ENCODE measurements at regions of chr6 and their contacts with region 1.

Region 1: DNA sequence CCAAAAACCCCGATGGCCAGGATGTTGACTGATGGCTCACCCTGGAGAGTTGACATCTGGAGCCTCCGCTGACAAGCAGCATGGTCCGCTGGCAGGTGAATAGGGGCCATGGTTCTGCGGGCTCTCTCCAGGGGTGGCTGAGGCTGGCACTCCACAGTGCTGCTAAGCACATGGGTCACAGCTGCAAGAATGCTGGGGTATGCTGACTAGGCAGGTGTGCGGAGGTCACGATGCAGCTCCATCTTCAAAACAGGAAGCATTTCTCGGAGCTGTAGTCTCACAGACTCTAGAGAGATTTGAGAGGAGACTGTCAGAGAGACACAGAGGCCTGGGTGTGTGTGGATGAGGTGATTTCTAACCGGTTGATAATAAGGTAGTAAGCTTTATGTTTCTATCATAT is 341.6 kb downstream of the NRN1 start:
- DNase-seq: peak; percentile 33
- H3K4me3 Mint-ChIP-seq: peak overlapping the region; percentile 17
- H3K27ac Mint-ChIP-seq: peak overlapping the region; percentile 25
- H3K4me1 Mint-ChIP-seq: peaks cover 45% of the 10 kb centered on the region
- H3K27me3 Mint-ChIP-seq: no peaks in the 10 kb centered on the region

Region 2: DNA sequence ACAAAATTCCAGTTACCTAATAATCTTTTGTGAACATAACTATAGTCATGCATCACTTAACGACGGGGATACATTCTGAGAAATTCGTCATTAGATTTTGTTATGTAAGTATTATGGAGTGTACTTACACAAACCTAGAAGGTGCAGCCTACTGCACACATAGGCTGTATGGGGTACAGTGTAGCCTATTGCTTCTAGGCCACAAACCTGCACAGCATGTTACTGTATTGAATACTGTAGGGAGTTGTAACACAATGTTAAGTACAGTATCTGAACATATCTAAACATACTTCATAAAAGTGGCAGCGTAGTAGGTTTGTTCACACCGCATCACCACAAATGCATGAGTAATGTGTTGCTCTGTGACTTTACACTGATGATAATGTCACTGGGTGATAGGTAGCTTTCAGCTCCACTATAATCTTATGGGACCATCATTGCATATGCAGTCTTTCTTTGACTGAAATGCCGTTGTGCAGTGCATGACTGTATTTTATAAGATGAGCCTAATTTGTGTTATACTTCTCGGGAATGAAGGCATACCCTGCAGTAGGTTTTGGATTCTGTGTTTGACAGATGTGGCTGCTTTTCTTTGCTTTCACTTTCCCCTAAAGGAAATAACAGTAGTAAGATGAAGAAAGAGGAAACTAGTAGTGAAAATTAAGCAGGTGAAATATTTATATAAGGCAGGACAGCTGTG is 38.3 kb before region 1 on chr6:
- CTCF ChIA-PET with region 1: no interaction called
- POLR2A ChIA-PET with region 1: no interaction called
- intact Hi-C with region 1: loop called (anchors 5 kb)
- DNase-seq: peak; percentile 37
- H3K4me3 Mint-ChIP-seq: no peak overlapping the region
- H3K27ac Mint-ChIP-seq: no peak overlapping the region
- H3K4me1 Mint-ChIP-seq: peaks cover 20% of the 10 kb centered on the region
- H3K27me3 Mint-ChIP-seq: no peaks in the 10 kb centered on the region

Region 3: GRCh38 chr6:5695260-5696245 is 30.4 kb after region 1 on chr6:
- CTCF ChIA-PET with region 1: no interaction called
- POLR2A ChIA-PET with region 1: no interaction called
- intact Hi-C with region 1: no loop called
- DNase-seq: no peak
- H3K4me3 Mint-ChIP-seq: no peak overlapping the region
- H3K27ac Mint-ChIP-seq: no peak overlapping the region
- H3K4me1 Mint-ChIP-seq: peaks cover 4% of the 10 kb centered on the region
- H3K27me3 Mint-ChIP-seq: no peaks in the 10 kb centered on the region

Region 4: DNA sequence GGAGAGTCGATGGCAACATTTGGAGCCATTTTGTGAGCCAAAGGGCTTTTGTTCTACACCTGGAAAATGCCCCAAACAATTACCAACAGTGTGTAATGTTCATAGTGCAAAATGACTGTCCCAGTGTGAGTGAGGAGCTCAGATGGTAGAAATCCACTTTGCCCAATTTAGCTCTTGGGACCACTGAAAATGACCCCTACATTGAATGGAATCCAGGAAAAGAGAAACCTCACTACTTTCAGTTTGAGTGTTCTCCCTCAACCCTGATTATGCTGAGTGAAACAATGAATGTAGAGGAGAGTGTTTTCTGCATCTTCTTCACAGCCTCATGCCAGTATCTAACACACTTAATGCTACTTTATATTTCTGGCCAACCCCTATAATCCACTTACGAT is 426.4 kb after region 1 on chr6:
- CTCF ChIA-PET with region 1: no interaction called
- POLR2A ChIA-PET with region 1: no interaction called
- intact Hi-C with region 1: no loop called
- DNase-seq: no peak
- H3K4me3 Mint-ChIP-seq: no peak overlapping the region
- H3K27ac Mint-ChIP-seq: no peak overlapping the region
- H3K4me1 Mint-ChIP-seq: peaks cover 9% of the 10 kb centered on the region
- H3K27me3 Mint-ChIP-seq: peaks cover 12% of the 10 kb centered on the region